Activated B cell treated with CpG ODN at 0.5 μM for 24 hours (primary cell): ENCODE measurements at regions of chr19 and their contacts with region 1.

Region 1: DNA sequence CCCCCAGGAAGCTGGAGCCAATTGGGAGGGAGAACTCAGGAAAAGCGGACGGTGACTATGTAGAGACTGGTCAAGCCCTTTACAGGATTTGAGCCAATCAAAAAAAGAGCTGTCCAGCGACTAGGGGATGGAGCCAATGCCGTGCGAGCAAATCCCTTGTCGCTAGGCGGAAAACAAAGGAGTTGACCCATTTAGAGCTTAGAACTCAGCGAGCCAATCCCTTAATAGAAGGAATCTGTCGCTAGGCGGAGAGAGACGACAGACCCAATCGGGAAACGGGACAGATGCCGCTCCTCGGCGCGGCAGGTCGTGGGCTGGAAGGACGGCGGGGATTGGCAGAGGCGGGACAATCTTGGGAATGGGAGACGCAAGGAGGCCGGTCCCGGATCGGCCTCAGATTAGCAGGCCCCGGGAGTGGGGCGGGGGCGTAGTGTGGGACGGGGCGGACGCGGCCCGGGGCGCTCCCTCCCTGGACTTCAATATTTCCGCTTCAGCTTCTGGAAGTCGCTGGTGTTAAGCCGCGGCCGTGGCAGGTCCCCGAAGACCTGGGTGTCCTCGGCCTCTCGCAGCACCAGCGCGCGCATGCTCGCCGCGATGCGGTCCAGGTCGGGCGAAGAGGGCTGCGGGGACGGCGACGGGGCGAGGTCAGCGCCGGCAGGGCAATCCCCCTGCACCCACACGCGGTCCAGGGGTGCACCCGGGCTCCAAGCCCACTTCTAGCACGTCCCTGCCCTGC is 2.2 kb upstream of the PNKP start:
- DNase-seq: peak; percentile 82
- ATAC-seq: peak; percentile 80
- H3K4me3 Mint-ChIP-seq: no peak overlapping the region
- H3K27ac Mint-ChIP-seq: no peak overlapping the region
- H3K4me1 Mint-ChIP-seq: peaks cover 39% of the 10 kb centered on the region
- H3K27me3 Mint-ChIP-seq: no peaks in the 10 kb centered on the region
- CTCF ChIP-seq: no peak

Region 2: DNA sequence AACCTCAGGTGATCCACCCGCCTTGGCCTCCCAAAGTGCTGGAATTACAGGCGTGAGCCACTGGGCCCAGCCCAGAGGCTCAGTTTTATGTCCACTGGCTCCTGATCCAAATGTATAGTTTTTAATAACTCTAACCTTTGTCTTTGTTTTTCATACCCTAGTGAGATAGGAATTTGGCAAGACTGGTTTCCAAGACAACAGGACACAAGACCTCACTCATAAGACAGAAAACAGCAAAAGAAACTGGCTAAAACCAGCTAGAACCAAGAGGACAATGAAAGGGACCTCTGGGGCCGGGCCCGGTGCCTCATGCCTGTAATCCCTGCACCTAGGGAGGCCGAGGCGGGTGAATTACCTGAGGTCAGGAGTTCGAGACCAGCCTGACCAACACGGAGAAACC is 151.1 kb before region 1 on chr19:
- CTCF ChIA-PET with region 1: no interaction called
- POLR2A ChIA-PET with region 1: interaction called, 3 read pairs
- intact Hi-C with region 1: loop called (anchors 5 kb)
- DNase-seq: no peak
- ATAC-seq: no peak
- H3K4me3 Mint-ChIP-seq: no peak overlapping the region
- H3K27ac Mint-ChIP-seq: no peak overlapping the region
- H3K4me1 Mint-ChIP-seq: peaks cover 7% of the 10 kb centered on the region
- H3K27me3 Mint-ChIP-seq: no peaks in the 10 kb centered on the region
- CTCF ChIP-seq: no peak

Region 3: DNA sequence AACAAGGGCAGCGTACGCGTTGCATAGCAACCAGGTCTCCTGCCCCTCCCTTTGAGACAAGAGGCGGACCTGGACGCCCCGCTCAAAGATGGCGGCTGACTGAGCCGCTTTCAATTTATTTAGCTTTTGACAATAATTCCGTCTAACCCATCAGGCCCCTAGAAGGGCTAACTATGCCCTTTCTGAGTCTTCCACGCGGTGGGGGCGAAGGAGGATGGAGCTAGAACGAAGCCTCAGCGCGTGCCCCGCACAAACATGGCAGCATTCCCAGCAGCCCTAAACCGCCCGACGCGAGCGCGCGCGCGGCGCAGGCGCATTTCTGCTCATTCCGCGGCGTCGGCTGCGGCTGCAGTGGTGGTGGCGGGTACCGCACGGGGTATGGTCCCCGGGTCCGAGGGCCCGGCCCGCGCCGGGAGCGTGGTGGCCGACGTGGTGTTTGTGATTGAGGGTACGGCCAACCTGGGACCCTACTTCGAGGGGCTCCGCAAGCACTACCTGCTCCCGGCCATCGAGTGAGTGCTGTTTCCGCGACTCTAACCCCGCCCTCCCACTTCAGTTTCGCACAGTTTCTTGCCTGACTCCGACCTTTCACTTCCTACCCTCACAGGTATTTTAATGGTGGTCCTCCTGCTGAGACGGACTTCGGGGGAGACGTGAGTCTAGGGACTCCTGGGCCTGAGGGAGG is 51.5 kb before region 1 on chr19 and contains the start of gene MED25:
- CTCF ChIA-PET with region 1: no interaction called
- POLR2A ChIA-PET with region 1: interaction called, 21 read pairs
- intact Hi-C with region 1: loop called (anchors 1 kb)
- DNase-seq: peak; percentile 91
- ATAC-seq: peak; percentile 59
- H3K4me3 Mint-ChIP-seq: peak within 1 kb of the TSS; percentile 98
- H3K27ac Mint-ChIP-seq: peak within 1 kb of the TSS; percentile 99
- H3K4me1 Mint-ChIP-seq: peaks cover 40% of the 10 kb centered on the region
- H3K27me3 Mint-ChIP-seq: no peaks in the 10 kb centered on the region
- CTCF ChIP-seq: no peak
- total RNA-seq, gene MED25: 70.1 and 88.8 TPM in 2 replicates

Region 4: DNA sequence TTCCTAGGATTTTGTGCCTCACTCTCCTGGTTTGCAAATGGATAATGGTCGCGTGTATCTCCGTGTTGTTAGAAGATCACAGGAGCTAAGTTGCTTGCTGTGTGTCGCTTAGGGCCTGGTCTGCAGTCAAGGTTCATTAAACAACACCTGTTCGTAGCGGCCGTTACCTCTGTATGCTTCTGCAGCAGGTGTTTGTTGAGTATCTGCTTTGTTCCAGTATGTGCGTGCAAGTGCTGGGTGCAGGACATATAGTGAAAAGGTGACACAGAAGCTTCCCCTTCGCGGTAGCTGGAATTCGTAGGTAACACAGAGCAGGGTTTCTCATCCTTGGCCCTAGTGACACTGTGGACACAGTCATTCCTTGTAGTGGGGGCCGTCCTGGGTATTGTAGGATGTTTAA is 46.1 kb before region 1 on chr19:
- CTCF ChIA-PET with region 1: no interaction called
- POLR2A ChIA-PET with region 1: interaction called, 12 read pairs
- intact Hi-C with region 1: loop called (anchors 1 kb)
- DNase-seq: no peak
- ATAC-seq: no peak
- H3K4me3 Mint-ChIP-seq: no peak overlapping the region
- H3K27ac Mint-ChIP-seq: no peak overlapping the region
- H3K4me1 Mint-ChIP-seq: peaks cover 29% of the 10 kb centered on the region
- H3K27me3 Mint-ChIP-seq: no peaks in the 10 kb centered on the region
- CTCF ChIP-seq: no peak

Region 5: GRCh38 chr19:49843265-49843664 is 26.3 kb before region 1 on chr19:
- CTCF ChIA-PET with region 1: no interaction called
- POLR2A ChIA-PET with region 1: interaction called, 20 read pairs
- intact Hi-C with region 1: no loop called
- DNase-seq: no peak
- ATAC-seq: peak; percentile 97
- H3K4me3 Mint-ChIP-seq: peak overlapping the region; percentile 68
- H3K27ac Mint-ChIP-seq: peak overlapping the region; percentile 82
- H3K4me1 Mint-ChIP-seq: peaks cover 45% of the 10 kb centered on the region
- H3K27me3 Mint-ChIP-seq: no peaks in the 10 kb centered on the region
- CTCF ChIP-seq: no peak

Region 6: DNA sequence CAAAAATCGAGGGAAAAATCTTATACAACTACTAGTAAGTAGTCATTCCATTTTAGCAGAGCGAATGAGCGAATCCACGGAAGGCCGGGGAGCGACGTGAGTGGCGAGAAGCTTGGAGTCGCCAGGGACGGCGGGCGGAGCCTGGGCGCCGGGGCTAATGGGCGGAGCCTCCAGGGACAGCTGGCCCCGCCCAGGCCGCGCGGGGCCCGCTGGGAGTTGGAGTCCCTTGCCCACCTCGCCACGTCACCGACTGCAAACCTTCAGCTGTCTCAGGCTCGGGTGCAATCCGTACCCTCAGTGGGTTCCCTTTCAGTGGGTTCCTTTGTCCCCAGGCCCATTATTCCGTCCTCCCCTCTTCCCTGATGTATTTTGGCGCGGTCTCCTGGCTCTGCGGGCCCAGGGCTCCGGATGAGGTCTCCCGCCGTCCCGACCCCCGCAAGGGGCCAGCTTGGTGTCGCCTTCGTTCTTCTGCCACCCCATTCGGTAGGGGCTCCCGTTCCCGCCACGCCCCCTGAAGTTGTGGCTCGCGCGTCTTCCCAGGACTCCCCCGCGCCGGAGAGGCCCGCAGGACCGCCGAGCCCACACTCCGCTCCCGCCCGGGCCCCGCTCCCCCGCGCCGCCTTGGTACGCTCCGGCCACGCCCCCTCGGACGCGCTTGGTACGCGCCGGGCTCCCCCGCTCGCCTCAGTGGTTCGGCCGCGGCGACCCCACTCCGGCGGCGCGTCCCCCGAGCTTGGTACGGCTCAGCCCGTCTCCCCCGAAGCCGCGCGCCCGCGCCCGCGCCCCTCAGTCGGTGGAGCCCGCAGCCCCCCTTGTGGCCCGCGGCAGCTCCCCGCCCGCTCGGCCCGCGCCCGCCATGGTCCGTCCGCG is 18.9 kb before region 1 on chr19 and contains the start of gene PTOV1:
- CTCF ChIA-PET with region 1: no interaction called
- POLR2A ChIA-PET with region 1: interaction called, 62 read pairs
- intact Hi-C with region 1: loop called (anchors 1 kb)
- DNase-seq: peak; percentile 96
- ATAC-seq: peak; percentile 84
- H3K4me3 Mint-ChIP-seq: peak within 1 kb of the TSS; percentile 92
- H3K27ac Mint-ChIP-seq: peak within 1 kb of the TSS; percentile 95
- H3K4me1 Mint-ChIP-seq: peaks cover 56% of the 10 kb centered on the region
- H3K27me3 Mint-ChIP-seq: no peaks in the 10 kb centered on the region
- CTCF ChIP-seq: no peak
- total RNA-seq, gene PTOV1: 103 and 107 TPM in 2 replicates

Region 7: GRCh38 chr19:49889687-49890348 is 20.2 kb after region 1 on chr19:
- CTCF ChIA-PET with region 1: interaction called, 3 read pairs
- POLR2A ChIA-PET with region 1: interaction called, 9 read pairs
- intact Hi-C with region 1: loop called (anchors 1 kb)
- DNase-seq: no peak
- ATAC-seq: peak; percentile 66
- H3K4me3 Mint-ChIP-seq: peak overlapping the region; percentile 82
- H3K27ac Mint-ChIP-seq: peak overlapping the region; percentile 7
- H3K4me1 Mint-ChIP-seq: peaks cover 41% of the 10 kb centered on the region
- H3K27me3 Mint-ChIP-seq: no peaks in the 10 kb centered on the region
- CTCF ChIP-seq: peak; percentile 39

Region 8: DNA sequence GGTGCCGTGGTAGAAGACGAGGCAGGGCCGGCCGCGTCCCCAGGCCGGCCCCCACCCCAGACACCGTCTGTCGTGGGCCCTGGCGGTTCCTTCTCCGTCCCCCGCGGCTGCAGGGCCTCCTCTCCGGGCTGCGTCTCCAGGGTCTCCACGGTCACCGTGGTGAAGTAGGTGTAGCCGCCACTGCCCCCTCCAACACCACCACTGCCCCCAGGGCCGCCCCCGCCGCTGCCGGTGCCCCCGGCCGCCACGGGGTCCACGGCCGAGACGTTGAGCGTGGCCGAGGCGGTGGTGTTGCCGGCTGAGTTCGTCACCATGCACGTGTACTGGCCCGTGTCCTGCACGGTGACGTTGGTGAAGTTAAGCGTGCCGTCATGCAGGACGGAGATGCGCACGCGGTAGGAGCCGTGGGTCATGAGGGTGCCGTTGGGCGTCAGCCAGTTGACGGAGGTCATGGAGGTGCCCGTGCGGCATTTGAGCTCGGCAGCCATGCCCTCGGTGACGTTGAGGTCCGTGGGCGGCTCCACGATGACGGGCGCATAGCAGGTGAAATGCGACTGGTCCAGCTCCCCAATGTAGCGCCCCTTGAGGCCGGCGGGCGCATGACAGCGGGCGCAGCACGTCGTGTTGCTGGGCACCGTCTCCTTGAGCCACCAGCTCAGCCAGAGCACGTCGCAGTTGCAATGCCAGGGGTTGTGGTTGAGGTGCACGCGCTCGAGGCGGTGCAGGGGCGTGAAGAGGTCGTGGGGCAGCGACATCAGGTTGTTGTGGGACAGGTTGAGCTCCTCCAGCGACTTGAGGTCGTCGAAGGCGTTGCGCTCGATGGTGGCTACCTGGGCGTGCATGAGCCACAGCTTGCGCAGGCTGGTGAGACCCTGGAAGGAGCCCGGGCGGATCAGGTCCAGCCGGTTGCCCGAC is 648.7 kb after region 1 on chr19:
- CTCF ChIA-PET with region 1: no interaction called
- POLR2A ChIA-PET with region 1: no interaction called
- intact Hi-C with region 1: no loop called
- DNase-seq: no peak
- ATAC-seq: no peak
- H3K4me3 Mint-ChIP-seq: no peak overlapping the region
- H3K27ac Mint-ChIP-seq: no peak overlapping the region
- H3K4me1 Mint-ChIP-seq: no peaks in the 10 kb centered on the region
- H3K27me3 Mint-ChIP-seq: peaks cover 8% of the 10 kb centered on the region
- CTCF ChIP-seq: no peak